ENCODE measurements at regions of chr11 and their contacts with region 1.

Region 1: DNA sequence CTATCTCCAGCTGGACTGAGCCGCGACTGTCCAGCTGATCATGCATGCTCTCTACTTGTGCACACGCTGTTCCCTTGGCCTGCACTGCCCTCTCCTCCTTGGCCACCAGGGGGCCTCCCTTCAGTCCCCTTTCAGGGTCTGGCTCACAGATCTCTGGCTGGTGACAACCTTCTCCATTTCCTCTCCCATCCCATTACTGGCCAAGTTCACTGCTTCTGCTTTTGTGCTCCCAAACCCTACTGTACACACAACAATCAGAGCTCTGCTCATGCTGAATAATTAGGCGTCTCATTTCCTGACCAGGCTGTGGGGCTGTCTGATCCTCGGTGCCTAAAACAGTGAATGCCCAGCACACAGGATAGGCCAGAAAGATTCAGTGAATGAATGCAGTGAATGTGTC is 224.0 kb upstream of the NARS2 start:
- H3K4me3 Mint-ChIP-seq: no peak overlapping the region
- H3K27ac Mint-ChIP-seq: peak overlapping the region; percentile 80
- H3K4me1 Mint-ChIP-seq: peaks cover 60% of the 10 kb centered on the region
- H3K27me3 Mint-ChIP-seq: peaks cover 2% of the 10 kb centered on the region

Region 2: GRCh38 chr11:78767027-78767932 is 31.4 kb before region 1 on chr11:
- intact Hi-C with region 1: no loop called
- H3K4me3 Mint-ChIP-seq: no peak overlapping the region
- H3K27ac Mint-ChIP-seq: no peak overlapping the region
- H3K4me1 Mint-ChIP-seq: no peaks in the 10 kb centered on the region
- H3K27me3 Mint-ChIP-seq: peaks cover 13% of the 10 kb centered on the region

Region 3: DNA sequence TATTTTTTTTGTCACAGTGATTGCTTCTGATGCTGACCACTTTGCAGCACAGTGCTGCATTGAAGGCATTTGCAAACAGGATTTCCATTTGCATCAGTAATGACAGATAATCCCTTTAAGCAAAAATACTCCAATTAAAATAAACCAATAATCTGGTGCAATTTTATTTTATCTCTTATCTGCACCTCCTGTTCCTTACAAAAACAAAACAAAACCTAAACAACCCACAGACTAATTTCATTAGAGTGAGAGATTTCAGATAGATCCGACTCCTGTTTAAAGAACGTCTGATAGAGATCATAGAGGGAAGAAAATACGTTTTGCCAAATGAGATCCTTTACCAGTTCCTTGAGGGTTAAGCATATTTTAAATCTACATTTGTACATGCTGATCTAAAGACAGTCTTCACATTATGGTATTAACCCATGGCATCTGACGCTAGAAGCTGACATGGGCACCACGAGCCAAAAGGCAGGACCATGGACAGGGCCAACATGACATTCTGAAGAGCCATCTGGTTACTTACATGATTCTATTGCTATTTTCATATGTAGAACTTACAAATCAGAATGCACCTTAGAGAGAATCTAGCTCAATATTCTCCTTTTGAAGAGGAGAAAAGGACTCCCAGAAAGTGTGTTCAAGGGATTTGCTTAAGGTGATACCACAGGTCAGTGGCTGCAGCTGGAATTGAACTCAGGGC is 62.2 kb after region 1 on chr11:
- intact Hi-C with region 1: no loop called
- H3K4me3 Mint-ChIP-seq: no peak overlapping the region
- H3K27ac Mint-ChIP-seq: no peak overlapping the region
- H3K4me1 Mint-ChIP-seq: no peaks in the 10 kb centered on the region
- H3K27me3 Mint-ChIP-seq: peaks cover 21% of the 10 kb centered on the region

Region 4: GRCh38 chr11:78961247-78961646 is 162.6 kb after region 1 on chr11:
- intact Hi-C with region 1: loop called (anchors 1 kb)
- H3K4me3 Mint-ChIP-seq: no peak overlapping the region
- H3K27ac Mint-ChIP-seq: no peak overlapping the region
- H3K4me1 Mint-ChIP-seq: no peaks in the 10 kb centered on the region
- H3K27me3 Mint-ChIP-seq: peaks cover 66% of the 10 kb centered on the region

Region 5: GRCh38 chr11:79076526-79077115 is 278.0 kb after region 1 on chr11:
- intact Hi-C with region 1: loop called (anchors 2 kb)
- H3K4me3 Mint-ChIP-seq: no peak overlapping the region
- H3K27ac Mint-ChIP-seq: no peak overlapping the region
- H3K4me1 Mint-ChIP-seq: no peaks in the 10 kb centered on the region
- H3K27me3 Mint-ChIP-seq: peaks cover 3% of the 10 kb centered on the region

Measured in dendritic cell treated with granulocyte-macrophage colony-stimulating factor and Interleukin-4, amounts not matched to agents 40 ng/mL and 50 ng/mL, for 4 days (primary cell).